AG04449 (cell line): ENCODE measurements at regions of chr15 and their contacts with region 1.

Region 1: GRCh38 chr15:99282121-99282520 is 30.8 kb downstream of the LRRC28 start:
- DNase-seq: no peak
- H3K4me3 ChIP-seq: no peak overlapping the region
- CTCF ChIP-seq: no peak

Region 2: GRCh38 chr15:99361541-99362185 is 79.5 kb after region 1 on chr15:
- CTCF ChIA-PET with region 1: interaction called, 13 read pairs
- POLR2A ChIA-PET with region 1: no interaction called
- DNase-seq: no peak
- H3K4me3 ChIP-seq: no peak overlapping the region
- CTCF ChIP-seq: peak; percentile 16

Region 3: DNA sequence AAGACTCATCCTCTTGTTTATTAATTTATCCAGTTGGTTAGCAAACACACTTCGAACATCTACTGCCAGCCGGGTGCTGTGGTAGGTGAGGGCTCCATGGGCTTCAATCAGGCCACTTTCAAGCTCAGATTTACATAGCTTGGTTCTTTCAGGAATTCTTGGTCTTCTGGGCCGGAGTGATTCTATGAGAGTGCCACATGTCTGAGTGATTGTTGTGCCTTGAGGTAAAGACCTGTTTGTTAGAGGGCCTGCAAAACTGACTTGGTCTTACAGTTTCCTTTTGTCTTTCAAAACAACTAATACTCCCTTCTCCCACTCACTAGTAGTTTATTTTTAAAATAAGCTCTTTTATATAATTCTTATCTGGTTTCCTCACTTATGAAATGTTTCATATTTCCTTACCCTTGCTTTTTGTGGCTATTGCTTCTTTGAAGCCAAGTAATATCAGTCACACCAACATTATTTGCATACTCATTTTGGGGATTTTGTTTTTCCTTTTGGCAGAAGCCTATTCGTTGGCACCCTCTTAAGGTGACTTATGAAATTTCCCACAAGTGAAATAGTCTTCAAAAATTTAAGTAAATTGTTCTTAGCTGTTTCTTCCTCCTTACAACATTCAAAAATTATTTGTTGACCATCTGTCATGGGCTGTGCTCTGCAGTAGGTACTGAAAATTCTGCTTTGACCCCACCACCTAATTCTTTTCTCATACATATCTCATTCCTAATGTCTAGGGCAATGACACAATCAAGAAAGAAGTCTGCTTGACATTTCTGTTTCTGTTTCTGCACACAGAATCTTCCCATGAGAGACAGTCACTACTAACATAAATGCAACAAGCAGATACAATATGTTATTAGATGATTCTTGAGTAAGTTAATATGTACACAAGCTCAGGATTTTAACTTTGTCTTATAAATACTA is 89.3 kb after region 1 on chr15:
- CTCF ChIA-PET with region 1: interaction called, 19 read pairs
- POLR2A ChIA-PET with region 1: no interaction called
- DNase-seq: no peak
- H3K4me3 ChIP-seq: no peak overlapping the region
- CTCF ChIP-seq: no peak

Region 4: DNA sequence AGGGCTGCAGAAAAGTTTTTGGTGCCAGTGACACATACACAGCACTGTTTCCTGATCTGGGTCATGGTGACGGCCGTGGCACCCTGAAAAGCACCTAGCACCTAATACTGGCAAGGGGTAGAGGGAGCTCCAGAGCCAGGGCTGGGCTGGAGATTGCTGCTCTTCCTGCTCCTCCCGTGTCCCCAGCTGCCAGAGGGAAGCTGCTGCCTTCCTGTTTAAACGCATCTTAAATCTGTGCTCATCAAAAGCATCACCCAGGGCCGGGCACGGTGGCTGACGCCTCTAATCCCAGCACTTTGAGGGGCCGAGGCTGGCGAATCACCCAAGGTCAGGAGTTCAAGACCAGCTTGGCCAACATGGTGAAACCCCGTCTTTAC is 127.0 kb after region 1 on chr15:
- CTCF ChIA-PET with region 1: interaction called, 11 read pairs
- POLR2A ChIA-PET with region 1: no interaction called
- DNase-seq: no peak
- H3K4me3 ChIP-seq: no peak overlapping the region
- CTCF ChIP-seq: peak; percentile 80

Region 5: DNA sequence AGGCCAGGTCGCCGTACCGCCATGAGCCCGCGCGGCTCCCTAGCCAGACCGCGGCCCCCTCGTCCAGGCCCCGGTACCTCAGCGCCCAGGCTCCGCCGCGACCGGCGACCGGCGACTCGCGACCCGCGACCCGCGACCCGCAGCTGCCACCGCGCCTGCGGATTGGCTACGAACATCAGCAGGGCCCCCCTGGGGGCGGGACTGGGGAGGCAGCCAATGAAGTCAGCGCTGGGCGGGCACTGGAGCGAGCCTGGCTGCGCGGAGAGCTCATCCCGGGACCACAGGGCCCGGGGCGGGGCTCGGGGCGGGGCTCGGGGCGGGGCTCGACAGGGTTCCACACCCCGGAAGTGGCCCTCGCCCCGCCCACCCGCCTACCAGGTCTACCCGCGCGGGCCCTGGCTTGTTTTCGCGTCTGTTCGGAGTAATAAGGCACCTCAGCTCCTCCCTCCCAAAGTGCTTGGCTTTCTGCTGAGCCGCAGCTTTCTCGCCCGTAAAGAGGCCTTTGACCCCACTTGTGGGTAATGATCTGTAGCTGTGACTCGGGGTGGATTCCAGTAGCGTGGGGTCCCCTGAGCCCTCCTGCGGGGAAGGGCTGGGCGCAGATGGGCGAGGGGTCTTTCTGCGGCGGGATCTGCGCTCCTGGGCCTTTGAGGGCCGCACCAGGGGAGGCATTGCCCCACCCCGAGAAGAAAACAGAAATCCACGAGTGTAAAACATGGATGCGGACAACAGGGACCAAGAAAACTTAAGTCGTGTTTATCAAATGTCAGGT is 451.3 kb after region 1 on chr15 and contains the start of gene LYSMD4:
- CTCF ChIA-PET with region 1: interaction called, 12 read pairs
- POLR2A ChIA-PET with region 1: no interaction called
- DNase-seq: peak; percentile 28
- H3K4me3 ChIP-seq: peak within 1 kb of the TSS; percentile 75
- CTCF ChIP-seq: no peak

Region 6: DNA sequence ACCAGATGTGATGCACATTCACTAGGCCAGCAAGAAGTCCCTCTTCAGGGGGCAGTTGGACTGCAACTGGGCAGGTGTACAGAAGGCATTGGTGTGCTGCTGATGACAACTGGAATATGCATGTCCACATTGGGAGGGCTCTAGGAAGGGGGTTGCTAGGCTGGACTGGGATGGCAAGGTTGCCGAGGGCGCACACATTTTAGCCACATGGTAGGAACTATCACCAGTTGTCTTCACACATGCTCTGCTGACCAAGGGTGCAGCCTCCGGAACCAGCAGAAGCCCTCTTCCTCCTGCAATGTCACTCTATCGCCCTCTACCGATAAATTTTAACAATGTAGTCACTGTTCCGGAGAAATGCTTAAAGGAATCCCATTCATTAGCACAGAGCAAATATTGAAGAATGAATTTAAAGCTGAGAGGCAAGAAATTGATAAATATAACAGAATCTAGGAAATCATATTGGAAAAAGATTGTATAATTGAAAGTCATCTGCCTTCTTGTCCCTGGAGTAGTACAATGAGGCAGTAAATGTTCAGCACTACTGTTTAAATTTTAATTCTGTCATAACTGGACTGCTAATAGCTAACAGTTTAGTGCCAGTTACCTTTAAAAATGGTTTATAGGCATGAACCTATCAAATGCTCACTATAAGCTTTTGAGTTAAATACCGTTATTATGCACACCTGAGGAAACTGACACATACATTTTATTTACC is 473.7 kb after region 1 on chr15:
- CTCF ChIA-PET with region 1: interaction called, 200 read pairs
- POLR2A ChIA-PET with region 1: no interaction called
- DNase-seq: peak; percentile 12
- H3K4me3 ChIP-seq: no peak overlapping the region
- CTCF ChIP-seq: peak; percentile 69